ENCODE measurements at regions of chr14 and their contacts with region 1.

Region 1: GRCh38 chr14:61761959-61762786 is at the start of gene SNAPC1:
- DNase-seq: peak; percentile 97 to 99
- ATAC-seq: peak; percentile 90 to 96
- H3K4me3 ChIP-seq: peak within 1 kb of the TSS; percentile 80
- H3K27ac ChIP-seq: peak within 1 kb of the TSS; percentile 80 to 88
- H3K4me1 ChIP-seq: peaks cover 36% of the 10 kb centered on the region
- CTCF ChIP-seq: no peak
- EP300 ChIP-seq: no peak
- POLR2A ChIP-seq: peak; percentile 91
- RAD21 ChIP-seq: no peak
- polyA plus RNA-seq, gene SNAPC1: 15.2 and 30.5 TPM in 2 replicates

Region 2: DNA sequence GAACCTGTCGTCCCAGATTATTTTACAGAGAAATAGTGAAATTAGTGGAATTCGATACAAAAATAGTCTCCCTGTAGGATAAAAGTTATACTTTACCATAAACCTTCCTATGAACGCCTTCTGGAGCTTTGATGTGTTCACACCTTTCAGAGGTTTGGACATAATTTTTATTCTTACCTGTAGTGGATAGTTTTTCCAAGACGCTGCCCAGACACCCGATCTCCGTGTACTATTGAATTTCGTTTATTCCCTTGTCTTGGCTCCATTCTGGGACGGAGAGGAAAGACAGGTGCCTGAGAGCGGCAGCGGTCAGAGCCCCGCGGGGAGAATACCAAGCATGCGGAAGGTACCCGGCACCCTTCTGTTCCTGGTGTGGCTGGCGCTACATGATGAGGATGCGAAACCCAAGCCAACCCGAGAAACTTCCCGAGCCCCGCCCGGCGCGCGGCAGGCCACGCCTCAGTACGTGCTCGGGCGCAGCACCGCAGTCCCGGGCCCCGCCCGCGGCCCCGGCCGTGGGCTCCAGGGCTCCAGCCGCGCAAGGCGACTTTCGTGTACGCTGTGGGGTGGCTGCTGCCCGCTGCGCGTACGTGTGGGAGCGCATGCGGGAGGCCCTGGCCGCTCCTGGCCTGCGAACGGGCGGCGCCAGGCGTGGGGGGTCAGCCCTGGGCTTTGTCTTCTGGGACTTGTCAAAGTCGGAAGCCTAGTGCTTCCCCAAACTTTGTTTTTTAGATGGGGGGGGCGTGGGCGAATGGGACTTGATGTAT is 11.3 kb before region 1 on chr14:
- CTCF ChIA-PET with region 1: interaction called, 5 read pairs
- POLR2A ChIA-PET with region 1: interaction called, 25 read pairs
- DNase-seq: peak; percentile 76 to 83
- ATAC-seq: peak; percentile 79 to 85
- H3K4me3 ChIP-seq: peak overlapping the region; percentile 38
- H3K27ac ChIP-seq: peak overlapping the region; percentile 72 to 89
- H3K4me1 ChIP-seq: peaks cover 69% of the 10 kb centered on the region
- CTCF ChIP-seq: no peak
- EP300 ChIP-seq: no peak
- POLR2A ChIP-seq: peak; percentile 63
- RAD21 ChIP-seq: peak in 1 of 2 experiments; percentile 16; a peak in 1 of 5 replicates

Region 3: GRCh38 chr14:61860294-61860918 is 98.2 kb after region 1 on chr14:
- CTCF ChIA-PET with region 1: no interaction called
- POLR2A ChIA-PET with region 1: no interaction called
- DNase-seq: peak; percentile 50 to 63
- ATAC-seq: peak; percentile 91
- H3K4me3 ChIP-seq: no peak overlapping the region
- H3K27ac ChIP-seq: no peak overlapping the region
- H3K4me1 ChIP-seq: no peaks in the 10 kb centered on the region
- CTCF ChIP-seq: peak; percentile 40
- EP300 ChIP-seq: no peak
- POLR2A ChIP-seq: no peak
- RAD21 ChIP-seq: peak; percentile 20 to 36; a peak in 1 of 5 replicates

Region 4: GRCh38 chr14:61894452-61895077 is 132.4 kb after region 1 on chr14:
- CTCF ChIA-PET with region 1: no interaction called
- POLR2A ChIA-PET with region 1: no interaction called
- DNase-seq: peak; percentile 69
- ATAC-seq: peak; percentile 73 to 90; a peak in 5 of 6 replicates
- H3K4me3 ChIP-seq: no peak overlapping the region
- H3K27ac ChIP-seq: no peak overlapping the region
- H3K4me1 ChIP-seq: no peaks in the 10 kb centered on the region
- CTCF ChIP-seq: peak; percentile 72
- EP300 ChIP-seq: no peak
- POLR2A ChIP-seq: no peak
- RAD21 ChIP-seq: peak; percentile 61 to 72

Measured in A549 (cell line).